GM10248 (cell line): ENCODE measurements at regions of chr4 and their contacts with region 1.

Region 1: GRCh38 chr4:13368217-13368616 is 115.9 kb downstream of the RAB28 start:
- DNase-seq: no peak
- CTCF ChIP-seq: no peak

Region 2: GRCh38 chr4:13355111-13355880 is 12.9 kb before region 1 on chr4:
- CTCF ChIA-PET with region 1: interaction called, 10 read pairs
- POLR2A ChIA-PET with region 1: no interaction called
- DNase-seq: no peak
- CTCF ChIP-seq: no peak